A673 (cell line): ENCODE measurements at regions of chr11 and their contacts with region 1.

Region 1: GRCh38 chr11:113222241-113222640 is 92.1 kb upstream of the TTC12 start:
- DNase-seq: no peak
- H3K4me3 ChIP-seq: no peak overlapping the region
- H3K27ac ChIP-seq: no peak overlapping the region
- H3K4me1 ChIP-seq: no peaks in the 10 kb centered on the region
- H3K27me3 ChIP-seq: no peaks in the 10 kb centered on the region
- CTCF ChIP-seq: no peak

Region 2: GRCh38 chr11:112878033-112878622 is 344.1 kb before region 1 on chr11:
- CTCF ChIA-PET with region 1: no interaction called
- POLR2A ChIA-PET with region 1: no interaction called
- intact Hi-C with region 1: no loop called
- DNase-seq: no peak
- H3K4me3 ChIP-seq: no peak overlapping the region
- H3K27ac ChIP-seq: no peak overlapping the region
- H3K4me1 ChIP-seq: no peaks in the 10 kb centered on the region
- H3K27me3 ChIP-seq: no peaks in the 10 kb centered on the region
- CTCF ChIP-seq: no peak

Region 3: DNA sequence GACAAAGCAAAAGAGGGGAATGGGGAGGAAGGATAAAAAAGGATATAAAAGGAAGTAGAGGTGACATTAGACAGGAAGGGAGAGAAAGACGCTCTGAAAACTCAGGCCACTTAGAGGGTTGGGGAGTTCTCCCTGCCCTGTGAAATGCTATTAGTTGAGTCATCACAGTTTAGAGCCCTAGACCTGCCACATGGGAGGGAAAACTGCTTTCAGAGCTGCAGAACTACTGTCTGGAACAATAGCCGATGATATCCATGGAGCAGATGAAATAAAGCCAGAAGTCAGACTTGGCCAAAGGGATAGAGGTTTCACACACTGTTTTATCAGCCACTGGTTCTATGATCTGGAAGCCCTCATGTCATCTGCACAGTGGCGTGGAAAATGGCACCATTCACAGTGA is 103.2 kb before region 1 on chr11:
- CTCF ChIA-PET with region 1: no interaction called
- POLR2A ChIA-PET with region 1: interaction called, 12 read pairs
- intact Hi-C with region 1: no loop called
- DNase-seq: peak; percentile 36
- H3K4me3 ChIP-seq: no peak overlapping the region
- H3K27ac ChIP-seq: no peak overlapping the region
- H3K4me1 ChIP-seq: no peaks in the 10 kb centered on the region
- H3K27me3 ChIP-seq: no peaks in the 10 kb centered on the region
- CTCF ChIP-seq: no peak

Region 4: GRCh38 chr11:113131036-113131775 is 91.0 kb before region 1 on chr11:
- CTCF ChIA-PET with region 1: no interaction called
- POLR2A ChIA-PET with region 1: no interaction called
- intact Hi-C with region 1: no loop called
- DNase-seq: no peak
- H3K4me3 ChIP-seq: no peak overlapping the region
- H3K27ac ChIP-seq: no peak overlapping the region
- H3K4me1 ChIP-seq: no peaks in the 10 kb centered on the region
- H3K27me3 ChIP-seq: no peaks in the 10 kb centered on the region
- CTCF ChIP-seq: no peak